ENCODE measurements at regions of chr12 and their contacts with region 1.

Region 1: GRCh38 chr12:108241986-108242703 is 97.0 kb downstream of the CMKLR1 start:
- DNase-seq: peak in 18 of 42 donors; percentile 16 to 73 (median 42)

Region 2: GRCh38 chr12:108119126-108119976 is 122.8 kb before region 1 on chr12:
- intact Hi-C with region 1: no loop called
- DNase-seq: no peak

Region 3: DNA sequence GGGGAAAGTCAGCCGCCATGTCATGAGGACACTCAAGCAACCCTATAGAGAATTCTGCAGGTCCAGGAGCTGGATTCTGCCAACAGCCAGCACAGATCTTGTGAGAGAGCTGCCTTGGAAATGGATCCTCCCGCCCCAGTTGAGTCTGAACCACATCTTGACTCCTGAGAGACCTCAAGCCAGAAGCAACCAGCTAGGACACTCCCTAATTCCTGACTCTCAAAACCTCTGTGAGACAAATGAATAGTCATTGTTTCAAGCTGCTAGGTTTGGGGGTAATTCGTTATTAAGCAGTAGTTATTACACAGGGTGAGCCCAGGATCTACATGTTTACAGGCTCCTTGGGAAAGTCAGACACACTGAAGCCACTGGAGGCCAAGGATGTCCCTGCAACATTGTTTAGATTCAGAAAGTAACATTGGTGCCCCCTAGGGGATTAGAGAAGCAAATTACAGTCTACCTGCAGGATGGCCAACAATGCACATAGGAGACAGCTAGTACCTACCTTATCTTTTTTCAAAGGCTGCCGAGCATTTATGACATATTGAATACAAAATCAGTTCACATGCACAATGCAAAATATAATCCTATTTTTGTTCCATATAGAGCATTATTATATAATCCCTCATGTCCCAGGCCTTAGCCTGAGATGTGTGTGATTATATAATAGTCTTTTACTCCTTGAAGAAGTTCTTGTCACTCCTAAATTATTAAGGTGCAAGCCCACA is 215.0 kb after region 1 on chr12:
- intact Hi-C with region 1: loop called (anchors 10 kb)
- DNase-seq: peak in 14 of 42 donors; percentile 5 to 72 (median 34)

Measured in head of caudate nucleus (tissue), 42 donors.